Ascending aorta (tissue), 2 donors: ENCODE measurements at regions of chr6 and their contacts with region 1.

Region 1: GRCh38 chr6:144013486-144013909 is 5.4 kb upstream of the PLAGL1 start:
- DNase-seq: peak in 1 of 2 donors; percentile 87
- H3K4me3 ChIP-seq: no peak overlapping the region
- H3K27ac ChIP-seq: no peak overlapping the region
- H3K4me1 ChIP-seq: no peaks in the 10 kb centered on the region
- H3K27me3 ChIP-seq: no peaks in the 10 kb centered on the region
- CTCF ChIP-seq: peak; percentile 82 to 92 (median 89)

Region 2: GRCh38 chr6:143940011-143940597 is 73.4 kb before region 1 on chr6:
- intact Hi-C with region 1: loop called (anchors 2 kb)
- DNase-seq: no peak
- H3K4me3 ChIP-seq: no peak overlapping the region
- H3K27ac ChIP-seq: no peak overlapping the region
- H3K4me1 ChIP-seq: no peaks in the 10 kb centered on the region
- H3K27me3 ChIP-seq: no peaks in the 10 kb centered on the region
- CTCF ChIP-seq: peak in 2 of 3 experiments; percentile 42 to 49

Region 3: GRCh38 chr6:144036064-144036834 is 22.8 kb after region 1 on chr6:
- intact Hi-C with region 1: no loop called
- DNase-seq: no peak
- H3K4me3 ChIP-seq: peak overlapping the region; percentile 39 to 52
- H3K27ac ChIP-seq: no peak overlapping the region
- H3K4me1 ChIP-seq: no peaks in the 10 kb centered on the region
- H3K27me3 ChIP-seq: no peaks in the 10 kb centered on the region
- CTCF ChIP-seq: no peak